Activated naive CD4-positive, alpha-beta T cell treated with anti-CD3 and anti-CD28 coated beads, Interleukin-2, amount 10 ng/mL, durations not matched to agents 7 days and 5 days (primary cell): ENCODE measurements at regions of chr4 and their contacts with region 1.

Region 1: GRCh38 chr4:27048429-27049238 is 188.0 kb downstream of the STIM2 start:
- DNase-seq: no peak
- H3K4me3 Mint-ChIP-seq: no peak overlapping the region
- H3K27ac Mint-ChIP-seq: no peak overlapping the region
- H3K4me1 Mint-ChIP-seq: peaks cover 5% of the 10 kb centered on the region
- H3K27me3 Mint-ChIP-seq: peaks cover 41% of the 10 kb centered on the region

Region 2: GRCh38 chr4:26780539-26780938 is 268.1 kb before region 1 on chr4:
- CTCF ChIA-PET with region 1: no interaction called
- DNase-seq: no peak
- H3K4me3 Mint-ChIP-seq: no peak overlapping the region
- H3K27ac Mint-ChIP-seq: no peak overlapping the region
- H3K4me1 Mint-ChIP-seq: no peaks in the 10 kb centered on the region
- H3K27me3 Mint-ChIP-seq: no peaks in the 10 kb centered on the region

Region 3: GRCh38 chr4:27308379-27308778 is 259.7 kb after region 1 on chr4:
- CTCF ChIA-PET with region 1: no interaction called
- DNase-seq: no peak
- H3K4me3 Mint-ChIP-seq: no peak overlapping the region
- H3K27ac Mint-ChIP-seq: no peak overlapping the region
- H3K4me1 Mint-ChIP-seq: no peaks in the 10 kb centered on the region
- H3K27me3 Mint-ChIP-seq: no peaks in the 10 kb centered on the region

Region 4: DNA sequence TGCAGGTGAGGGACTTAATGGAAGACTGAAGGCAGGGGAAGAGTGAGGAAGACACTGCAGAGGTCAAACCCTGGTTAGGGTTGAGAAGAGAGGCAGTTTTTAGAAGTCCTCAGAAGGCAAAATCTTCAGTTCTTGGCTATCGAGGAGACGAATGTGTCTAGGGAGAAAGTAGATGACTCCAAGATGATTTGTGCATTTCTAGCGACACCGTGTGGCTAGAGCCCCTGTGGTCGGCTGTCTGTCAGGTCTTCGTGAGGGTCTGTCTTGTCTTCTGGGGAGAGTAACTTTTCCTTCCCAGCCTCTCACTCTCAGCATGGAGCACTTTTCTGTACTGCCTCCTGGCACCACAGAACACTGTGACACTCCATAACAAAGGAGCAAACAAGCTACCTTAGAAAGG is 270.1 kb after region 1 on chr4:
- CTCF ChIA-PET with region 1: interaction called, 11 read pairs
- DNase-seq: peak; percentile 33
- H3K4me3 Mint-ChIP-seq: no peak overlapping the region
- H3K27ac Mint-ChIP-seq: no peak overlapping the region
- H3K4me1 Mint-ChIP-seq: no peaks in the 10 kb centered on the region
- H3K27me3 Mint-ChIP-seq: no peaks in the 10 kb centered on the region